Psoas muscle (tissue), 8 donors: ENCODE measurements at regions of chr19 and their contacts with region 1.

Region 1: DNA sequence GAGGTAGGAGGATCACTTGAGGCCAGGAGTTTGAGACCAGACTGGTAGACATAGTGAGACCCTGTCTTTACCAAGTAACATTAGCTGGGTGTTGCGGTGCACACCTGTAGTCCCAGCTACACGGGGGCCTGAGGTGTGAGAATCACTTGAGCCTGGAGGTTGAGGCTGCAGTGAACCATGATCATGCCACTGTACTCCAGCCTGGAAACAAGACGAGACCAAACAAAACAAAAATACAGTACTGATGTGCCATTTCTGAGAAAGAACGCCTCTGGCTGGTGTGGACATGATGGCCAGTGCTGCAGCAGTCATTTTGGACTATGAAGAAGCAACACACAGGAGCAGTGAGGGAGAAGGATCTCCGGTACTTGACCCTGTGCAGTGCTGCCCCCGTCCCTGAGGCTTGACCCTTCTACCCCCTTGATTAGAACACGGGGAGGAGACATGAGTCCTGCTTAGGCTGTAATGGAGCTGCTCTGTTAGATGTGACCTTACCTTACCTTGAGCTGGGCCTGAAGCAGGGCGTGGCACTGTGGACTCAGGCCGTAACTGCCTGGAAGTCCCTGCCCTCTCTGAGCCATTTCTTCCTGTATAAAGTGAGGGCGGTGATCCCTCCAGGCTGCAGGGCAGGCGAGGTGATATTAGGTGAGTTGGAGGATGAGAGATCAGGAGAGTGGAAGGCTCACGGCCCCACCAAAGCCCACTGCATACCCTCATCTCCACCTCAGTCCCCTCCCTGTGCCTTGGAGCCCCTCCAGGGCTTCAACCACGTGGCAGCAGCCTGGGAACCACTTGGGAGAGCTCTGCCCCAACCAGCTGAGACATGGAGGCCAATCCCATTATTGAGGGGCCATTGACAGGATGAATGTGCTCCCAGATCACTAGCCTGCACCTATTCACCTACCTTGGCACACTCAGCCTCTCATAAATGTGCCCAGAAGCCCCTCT is 5.9 kb downstream of the RPL18A start:
- DNase-seq: no peak
- ATAC-seq: peak; percentile 11 to 25 (median 18)
- H3K4me3 ChIP-seq: no peak overlapping the region
- H3K27ac ChIP-seq: peak overlapping the region; percentile 99
- H3K4me1 ChIP-seq: peaks cover 29% of the 10 kb centered on the region
- H3K27me3 ChIP-seq: peaks cover 0 to 10% (median 6%) of the 10 kb centered on the region in 3 donors
- CTCF ChIP-seq: no peak

Region 2: DNA sequence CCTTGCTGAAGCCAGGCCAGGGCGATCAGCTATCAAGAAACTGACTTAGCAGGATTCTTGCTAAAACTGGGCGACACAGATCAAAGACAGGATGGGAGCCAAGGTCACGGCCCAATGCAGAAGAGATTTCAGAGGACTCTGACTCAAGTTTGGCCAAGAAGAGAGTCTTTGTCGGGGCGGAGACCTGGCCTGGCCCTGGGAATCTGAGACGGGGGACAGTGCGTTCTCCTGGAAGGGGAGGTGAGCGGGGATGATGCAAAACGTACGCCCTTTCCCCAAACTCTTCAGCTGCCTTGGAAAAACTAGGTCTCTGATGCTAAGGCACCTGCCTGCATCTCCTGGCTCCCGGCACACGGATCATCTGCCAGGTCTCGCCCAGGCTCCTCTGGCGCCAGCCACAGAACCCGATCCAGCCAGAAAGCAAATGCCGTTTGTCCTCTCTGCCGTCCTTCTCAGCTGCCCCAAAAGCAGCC is 436.0 kb before region 1 on chr19:
- intact Hi-C with region 1: no loop called
- DNase-seq: peak; percentile 61 to 76
- ATAC-seq: peak in 3 of 4 donors; percentile 59 to 78 (median 68)
- H3K4me3 ChIP-seq: no peak overlapping the region
- H3K27ac ChIP-seq: no peak overlapping the region
- H3K4me1 ChIP-seq: peaks cover 3% of the 10 kb centered on the region
- H3K27me3 ChIP-seq: no peaks in the 10 kb centered on the region
- CTCF ChIP-seq: no peak

Region 3: GRCh38 chr19:17932485-17933338 is 67.1 kb after region 1 on chr19 and contains the start of gene CCDC124:
- intact Hi-C with region 1: loop called in 1 of 2 experiments (anchors 2 kb)
- DNase-seq: peak; percentile 93 to 95
- ATAC-seq: peak; percentile 97 to 98 (median 97)
- H3K4me3 ChIP-seq: peak within 1 kb of the TSS; percentile 81
- H3K27ac ChIP-seq: peak within 1 kb of the TSS; percentile 88
- H3K4me1 ChIP-seq: peaks cover 12% of the 10 kb centered on the region
- H3K27me3 ChIP-seq: no peaks in the 10 kb centered on the region
- CTCF ChIP-seq: peak; percentile 86
- total RNA-seq, gene CCDC124: 92.1 to 122 (median 99.6) TPM